ENCODE measurements at regions of chr1 and their contacts with region 1.

Region 1: DNA sequence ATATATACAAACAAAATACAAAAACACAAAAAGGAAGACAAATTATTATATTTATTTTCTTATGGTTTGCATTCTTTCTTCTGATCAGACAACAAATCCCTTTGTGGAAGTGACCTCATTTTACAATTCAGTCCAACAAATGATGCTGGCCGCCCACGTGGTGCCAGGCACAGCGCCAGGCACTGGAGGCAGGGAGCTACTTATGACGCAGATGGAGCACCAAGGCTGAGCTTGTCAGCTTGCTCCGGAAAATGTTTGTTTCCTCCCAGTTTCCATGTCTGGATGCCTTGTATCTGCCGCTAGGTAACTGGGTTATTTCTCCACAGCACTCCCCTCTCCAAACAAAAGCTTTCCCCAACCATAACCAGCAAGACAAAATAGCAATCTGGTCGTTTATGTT is 30.7 kb upstream of the CD34 start:
- DNase-seq: peak; percentile 48
- H3K4me3 Mint-ChIP-seq: no peak overlapping the region
- H3K27ac Mint-ChIP-seq: no peak overlapping the region
- H3K4me1 Mint-ChIP-seq: peaks cover 6% of the 10 kb centered on the region
- H3K27me3 Mint-ChIP-seq: no peaks in the 10 kb centered on the region
- CTCF ChIP-seq: no peak

Region 2: GRCh38 chr1:207711285-207711684 is 230.4 kb before region 1 on chr1:
- CTCF ChIA-PET with region 1: no interaction called
- POLR2A ChIA-PET with region 1: no interaction called
- intact Hi-C with region 1: no loop called
- DNase-seq: peak; percentile 74
- H3K4me3 Mint-ChIP-seq: no peak overlapping the region
- H3K27ac Mint-ChIP-seq: no peak overlapping the region
- H3K4me1 Mint-ChIP-seq: peaks cover 25% of the 10 kb centered on the region
- H3K27me3 Mint-ChIP-seq: no peaks in the 10 kb centered on the region
- CTCF ChIP-seq: peak; percentile 19

Region 3: GRCh38 chr1:207903767-207904166 is 37.9 kb before region 1 on chr1:
- CTCF ChIA-PET with region 1: interaction called, 7 read pairs
- POLR2A ChIA-PET with region 1: interaction called, 11 read pairs
- intact Hi-C with region 1: no loop called
- DNase-seq: peak; percentile 78
- H3K4me3 Mint-ChIP-seq: no peak overlapping the region
- H3K27ac Mint-ChIP-seq: peak overlapping the region; percentile 13
- H3K4me1 Mint-ChIP-seq: peaks cover 15% of the 10 kb centered on the region
- H3K27me3 Mint-ChIP-seq: no peaks in the 10 kb centered on the region
- CTCF ChIP-seq: no peak

Measured in MCF 10A (cell line).